GM13976 (cell line): ENCODE measurements at regions of chr4 and their contacts with region 1.

Region 1: GRCh38 chr4:123396307-123397143 is at the start of gene SPRY1:
- DNase-seq: peak; percentile 62
- CTCF ChIP-seq: no peak

Region 2: DNA sequence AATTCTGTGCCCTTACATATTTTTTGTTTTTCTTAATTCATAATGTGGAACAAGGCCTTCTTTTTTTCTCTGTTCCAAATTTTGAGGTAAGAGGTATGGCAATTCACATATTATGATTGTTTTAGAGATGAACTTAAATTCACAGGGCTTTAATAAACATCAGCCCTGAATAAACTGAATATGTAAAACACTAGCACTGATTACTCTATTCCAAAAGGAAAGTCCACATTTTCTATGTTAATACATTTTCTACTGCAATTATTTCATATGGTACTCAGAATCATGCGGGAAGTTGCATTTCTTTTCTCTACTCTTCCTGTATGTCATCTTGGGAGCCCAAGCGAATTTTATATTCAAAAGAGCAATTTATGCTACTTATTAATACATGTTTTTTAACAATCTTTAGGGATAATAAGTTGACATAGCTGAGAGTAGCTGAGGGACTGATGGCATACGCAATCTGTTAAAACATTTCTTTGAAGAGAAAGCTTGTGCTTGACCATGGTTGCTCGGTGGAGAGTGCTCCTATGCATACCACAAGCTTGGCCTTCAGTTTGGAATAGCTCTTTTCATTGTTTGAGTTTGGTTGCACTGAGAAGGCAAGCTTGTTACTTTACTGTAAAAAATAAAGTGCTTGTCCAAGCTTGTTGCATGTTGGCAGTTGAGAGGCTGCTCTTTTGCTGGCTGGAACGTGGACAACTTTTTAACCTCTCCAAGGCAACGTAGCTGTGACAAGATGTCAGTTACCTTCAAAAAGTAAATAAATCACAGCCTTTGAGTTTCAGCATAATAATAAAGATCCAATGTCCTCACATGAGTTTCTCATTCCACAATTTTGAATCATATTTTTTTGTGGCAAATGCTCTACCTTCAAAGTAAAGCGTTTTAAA is 196.2 kb before region 1 on chr4:
- in situ Hi-C with region 1: no loop called
- DNase-seq: no peak
- CTCF ChIP-seq: no peak

Region 3: DNA sequence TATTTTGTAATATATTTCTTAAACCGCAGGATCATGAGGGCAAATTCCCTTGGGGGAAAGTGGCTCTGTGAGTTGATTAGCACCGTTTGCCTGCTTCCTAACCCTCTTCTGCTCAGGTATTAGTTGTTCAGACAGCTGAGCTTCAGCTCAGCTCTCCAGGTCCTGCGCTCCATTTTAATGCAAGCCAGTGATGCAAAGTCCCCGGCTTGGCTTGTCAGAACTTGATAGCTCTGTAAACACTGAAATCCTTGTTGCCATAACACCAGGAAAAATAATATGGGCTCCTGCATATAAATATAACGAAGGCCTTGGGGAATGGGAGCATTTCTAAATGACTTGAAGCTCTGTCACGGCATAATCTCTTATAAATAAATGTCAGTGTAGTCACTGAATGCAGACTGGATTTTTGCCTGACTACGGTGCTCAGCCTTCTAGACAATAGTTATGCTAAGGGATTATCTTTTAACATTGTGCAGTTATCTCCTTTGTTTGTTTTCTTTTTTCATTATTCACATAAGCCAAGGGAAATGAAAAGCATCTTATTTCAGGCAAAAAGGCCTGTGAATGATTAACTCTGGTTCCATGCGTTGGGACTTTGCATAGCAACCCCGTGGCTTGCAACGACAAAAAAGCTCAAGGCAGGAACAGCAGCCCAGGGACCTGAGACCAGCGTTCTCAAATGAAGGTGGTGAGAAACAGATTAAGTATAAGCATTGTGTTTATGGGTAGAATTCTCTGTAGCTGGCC is 253.3 kb after region 1 on chr4:
- in situ Hi-C with region 1: loop called (anchors 25 kb)
- DNase-seq: no peak
- CTCF ChIP-seq: no peak

Region 4: GRCh38 chr4:124018383-124019317 is 622.1 kb after region 1 on chr4:
- in situ Hi-C with region 1: loop called (anchors 25 kb)
- DNase-seq: peak; percentile 32
- CTCF ChIP-seq: no peak